Activated CD4-positive, alpha-beta T cell treated with anti-CD3 and anti-CD28 coated beads, Interleukin-2, amount 10 ng/mL, durations not matched to agents 7 days and 5 days (primary cell): ENCODE measurements at regions of chr9 and their contacts with region 1.

Region 1: GRCh38 chr9:34440017-34440416 is 18.4 kb downstream of the FAM219A start:
- DNase-seq: no peak
- H3K4me3 Mint-ChIP-seq: no peak overlapping the region
- H3K27ac Mint-ChIP-seq: no peak overlapping the region
- H3K4me1 Mint-ChIP-seq: peaks cover 7% of the 10 kb centered on the region
- H3K27me3 Mint-ChIP-seq: no peaks in the 10 kb centered on the region

Region 2: DNA sequence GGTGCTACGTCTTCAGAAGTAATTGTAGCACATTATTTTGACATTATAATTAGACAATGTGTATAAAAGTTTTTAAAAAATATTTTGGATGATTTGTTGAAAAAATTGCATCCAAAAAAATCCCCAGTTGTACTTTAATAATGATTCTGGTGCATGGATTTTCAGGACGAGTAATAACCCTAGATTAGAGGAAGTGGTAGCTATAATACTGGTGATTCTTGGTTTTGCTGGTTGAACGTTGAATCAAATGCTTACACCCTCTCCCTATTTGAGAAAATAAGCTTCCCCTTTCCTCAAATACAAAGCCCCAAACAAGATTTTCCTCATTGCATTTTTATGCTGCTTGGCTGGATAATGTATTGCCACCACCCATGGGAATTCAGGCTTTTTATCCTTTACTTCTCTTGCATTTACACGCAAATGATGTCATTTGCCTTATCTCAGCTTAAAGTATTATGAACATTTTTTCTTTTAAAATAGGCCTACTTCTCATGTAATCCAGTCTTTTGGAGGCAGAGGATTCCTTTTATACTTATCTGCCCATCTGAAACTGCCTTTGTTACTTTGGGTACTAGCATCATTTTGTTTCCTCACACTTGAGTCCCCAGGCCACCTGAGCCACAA is 536.7 kb before region 1 on chr9:
- CTCF ChIA-PET with region 1: no interaction called
- POLR2A ChIA-PET with region 1: no interaction called
- DNase-seq: no peak
- H3K4me3 Mint-ChIP-seq: no peak overlapping the region
- H3K27ac Mint-ChIP-seq: no peak overlapping the region
- H3K4me1 Mint-ChIP-seq: peaks cover 3% of the 10 kb centered on the region
- H3K27me3 Mint-ChIP-seq: no peaks in the 10 kb centered on the region

Region 3: GRCh38 chr9:34451545-34451944 is 11.5 kb after region 1 on chr9:
- CTCF ChIA-PET with region 1: interaction called, 10 read pairs
- POLR2A ChIA-PET with region 1: no interaction called
- DNase-seq: no peak
- H3K4me3 Mint-ChIP-seq: no peak overlapping the region
- H3K27ac Mint-ChIP-seq: no peak overlapping the region
- H3K4me1 Mint-ChIP-seq: peaks cover 31% of the 10 kb centered on the region
- H3K27me3 Mint-ChIP-seq: no peaks in the 10 kb centered on the region